ENCODE measurements at regions of chr11 and their contacts with region 1.

Region 1: DNA sequence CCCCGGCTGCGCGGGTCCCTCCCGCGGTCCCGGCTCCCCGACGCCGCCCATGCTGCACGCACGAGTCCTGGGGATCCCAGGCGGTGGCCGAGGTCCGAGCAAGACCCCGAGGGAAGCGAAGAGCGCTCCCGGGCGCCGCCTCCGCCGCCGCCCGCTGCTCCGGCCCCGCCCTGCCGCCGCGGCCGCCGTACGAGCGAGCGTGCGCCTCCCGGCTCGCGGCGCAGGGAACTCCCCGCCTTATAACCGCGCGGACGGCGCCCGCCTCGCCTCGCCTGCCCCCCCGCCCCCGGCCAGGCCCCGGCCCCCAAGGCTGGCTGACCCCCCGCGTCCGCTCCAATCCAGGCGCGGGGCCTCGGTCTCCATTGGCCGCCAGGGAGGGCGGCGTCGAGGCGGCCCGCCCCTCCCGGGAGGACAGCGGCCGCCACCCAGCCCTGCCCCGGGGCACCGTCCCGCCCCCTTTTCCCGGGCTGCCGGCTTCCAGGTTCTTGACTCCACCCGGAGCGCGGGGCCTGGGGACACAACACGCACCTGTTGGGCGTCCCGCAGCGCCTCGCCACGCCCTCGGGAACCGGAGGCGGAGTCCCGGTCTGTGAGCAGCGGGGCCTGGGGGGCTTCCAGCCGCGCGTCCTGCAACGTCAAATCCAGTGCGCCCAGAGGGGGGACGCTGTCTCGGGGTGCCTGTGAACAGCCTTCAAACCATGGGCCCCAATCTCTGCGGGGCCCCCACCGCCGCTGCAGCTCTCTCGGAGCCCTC is at the start of gene FADS3:
- DNase-seq: peak; percentile 84 to 92
- ATAC-seq: peak; percentile 53 to 58
- H3K4me3 ChIP-seq: peak within 1 kb of the TSS; percentile 73 to 98 (median 90)
- H3K27ac ChIP-seq: peak within 1 kb of the TSS; percentile 82 to 96 (median 92)
- H3K4me1 ChIP-seq: peaks cover 32 to 34% of the 10 kb centered on the region in 2 donors
- H3K27me3 ChIP-seq: no peaks in the 10 kb centered on the region
- CTCF ChIP-seq: peak in 4 of 5 experiments; percentile 4 to 30 (median 15)
- POLR2A ChIP-seq: peak; percentile 92 to 98
- total RNA-seq, gene FADS3: 40.7 to 196 (median 89.0) TPM

Region 2: DNA sequence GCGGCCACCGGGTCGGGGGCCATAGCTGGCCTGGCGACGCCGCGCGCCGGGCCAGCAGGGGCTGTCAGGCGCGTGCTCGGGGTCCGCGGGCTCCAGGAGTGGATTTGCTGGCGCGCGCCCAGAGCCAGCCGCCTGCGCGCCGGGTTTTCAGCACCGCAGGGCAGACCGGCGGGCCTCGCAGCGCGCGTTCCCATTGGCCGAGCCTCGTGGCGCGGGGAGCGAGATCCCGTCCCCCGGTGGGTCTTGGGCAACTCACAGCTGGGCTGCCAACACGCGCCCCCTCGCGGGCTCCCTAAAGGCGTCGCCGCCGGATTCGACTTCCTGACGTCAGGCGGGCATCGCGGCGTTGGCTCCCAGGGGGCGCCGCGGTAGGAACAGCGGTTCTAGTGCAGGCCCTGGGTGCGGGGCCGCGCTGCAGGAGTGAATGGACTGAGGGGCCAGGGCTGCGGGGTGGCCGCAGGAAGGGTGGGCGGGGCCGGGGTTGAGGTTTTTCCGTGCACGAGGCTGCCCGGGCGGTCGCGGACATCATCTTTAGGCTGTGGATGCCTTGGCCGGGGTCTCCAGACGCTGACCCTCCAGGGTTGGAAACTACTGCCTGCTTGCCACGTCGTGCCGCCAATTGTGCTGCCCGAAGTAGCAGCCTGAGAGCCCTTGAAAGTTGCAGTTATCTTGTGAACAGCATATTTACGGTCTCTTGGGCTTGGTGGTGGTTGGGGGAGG is 74.6 kb before region 1 on chr11 and contains the start of gene FADS1:
- in situ Hi-C with region 1: no loop called
- intact Hi-C with region 1: loop called (anchors 1 kb)
- DNase-seq: peak; percentile 57 to 79
- ATAC-seq: peak; percentile 17 to 25
- H3K4me3 ChIP-seq: peak within 1 kb of the TSS; percentile 64 to 88 (median 80)
- H3K27ac ChIP-seq: peak within 1 kb of the TSS; percentile 87 to 92 (median 90)
- H3K4me1 ChIP-seq: peaks cover 11 to 17% of the 10 kb centered on the region in 2 donors
- H3K27me3 ChIP-seq: no peaks in the 10 kb centered on the region
- CTCF ChIP-seq: peak in 3 of 5 experiments; percentile 33 to 50 (median 48)
- POLR2A ChIP-seq: peak; percentile 40 to 62
- total RNA-seq, gene FADS1: 25.4 to 209 (median 62.5) TPM

Measured in gastrocnemius medialis (tissue), 4 donors.